Activated T-helper 1 cell treated with anti-CD3 and anti-CD28 coated beads, Interleukin-12 subunit alpha, Interleukin-12 subunit beta, Interleukin-2, Interleukin-4 antibody, amounts not matched to agents 30 ng/mL and 10 ng/mL and 1 ng/mL, durations not matched to agents 14 hours and 24 hours and 36 hours (primary cell): ENCODE measurements at regions of chr4 and their contacts with region 1.

Region 1: DNA sequence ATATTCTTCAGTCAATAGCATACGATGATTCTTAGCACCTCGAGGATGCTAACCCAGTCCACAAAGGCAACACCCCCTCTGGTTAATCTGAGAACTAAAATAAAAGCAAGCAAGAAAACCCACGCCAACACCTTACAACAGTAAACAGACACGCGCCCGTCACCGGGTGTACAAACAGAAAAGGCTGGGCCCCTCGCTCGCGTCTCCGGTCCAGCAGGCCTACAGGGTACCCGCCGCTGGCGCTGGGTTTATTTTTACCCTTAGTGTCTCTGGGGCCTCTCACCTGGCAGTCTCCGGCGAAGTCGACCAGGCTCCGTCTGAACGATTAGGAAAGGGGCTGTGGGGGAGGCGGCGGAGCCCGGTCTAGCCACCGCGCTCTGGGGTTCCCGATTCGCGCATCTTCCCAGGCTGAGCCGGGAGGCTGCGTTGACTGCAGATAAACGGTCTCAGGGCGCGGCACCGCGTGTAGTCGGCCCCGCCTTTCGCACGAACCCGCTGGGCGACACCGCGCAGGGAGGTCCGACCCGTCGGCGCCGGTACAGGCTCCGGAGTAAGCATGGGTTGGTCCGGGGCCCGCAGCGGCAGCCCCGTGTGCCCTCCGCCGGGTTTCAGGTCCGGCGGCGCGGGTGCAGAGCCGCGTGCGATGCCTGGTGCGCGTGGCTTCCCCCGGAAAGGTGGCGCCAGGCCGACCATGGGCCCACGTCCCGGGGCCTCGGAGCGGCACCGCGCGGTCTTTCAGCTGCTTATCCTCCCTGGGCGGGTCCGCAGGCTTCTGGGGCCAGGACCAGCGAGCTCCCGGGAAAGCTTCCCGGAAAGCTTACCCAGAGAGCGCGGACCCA is 441 bp downstream of the SLC9B2 start:
- DNase-seq: peak; percentile 60
- H3K4me3 Mint-ChIP-seq: peak overlapping the region; percentile 99
- H3K27ac Mint-ChIP-seq: peak overlapping the region; percentile 100
- H3K4me1 Mint-ChIP-seq: peaks cover 51% of the 10 kb centered on the region
- H3K27me3 Mint-ChIP-seq: no peaks in the 10 kb centered on the region

Region 2: GRCh38 chr4:102815981-102816380 is 260.1 kb before region 1 on chr4:
- intact Hi-C with region 1: no loop called
- DNase-seq: no peak
- H3K4me3 Mint-ChIP-seq: no peak overlapping the region
- H3K27ac Mint-ChIP-seq: peak overlapping the region; percentile 84
- H3K4me1 Mint-ChIP-seq: peaks cover 87% of the 10 kb centered on the region
- H3K27me3 Mint-ChIP-seq: no peaks in the 10 kb centered on the region

Region 3: GRCh38 chr4:102868781-102869568 is 207.1 kb before region 1 on chr4 and contains the start of gene CISD2:
- intact Hi-C with region 1: loop called (anchors 2 kb)
- DNase-seq: peak; percentile 91
- H3K4me3 Mint-ChIP-seq: peak within 1 kb of the TSS; percentile 93
- H3K27ac Mint-ChIP-seq: peak within 1 kb of the TSS; percentile 99
- H3K4me1 Mint-ChIP-seq: peaks cover 69% of the 10 kb centered on the region
- H3K27me3 Mint-ChIP-seq: no peaks in the 10 kb centered on the region
- total RNA-seq, gene CISD2: 41.2 and 50.7 TPM in 2 replicates

Region 4: GRCh38 chr4:103019308-103020124 is 56.6 kb before region 1 on chr4 and contains the start of gene SLC9B1:
- intact Hi-C with region 1: loop called (anchors 1 kb)
- DNase-seq: peak; percentile 93
- H3K4me3 Mint-ChIP-seq: peak within 1 kb of the TSS; percentile 90
- H3K27ac Mint-ChIP-seq: peak within 1 kb of the TSS; percentile 96
- H3K4me1 Mint-ChIP-seq: peaks cover 25% of the 10 kb centered on the region
- H3K27me3 Mint-ChIP-seq: no peaks in the 10 kb centered on the region
- total RNA-seq, gene SLC9B1: 0.51 and 0.52 TPM in 2 replicates

Region 5: DNA sequence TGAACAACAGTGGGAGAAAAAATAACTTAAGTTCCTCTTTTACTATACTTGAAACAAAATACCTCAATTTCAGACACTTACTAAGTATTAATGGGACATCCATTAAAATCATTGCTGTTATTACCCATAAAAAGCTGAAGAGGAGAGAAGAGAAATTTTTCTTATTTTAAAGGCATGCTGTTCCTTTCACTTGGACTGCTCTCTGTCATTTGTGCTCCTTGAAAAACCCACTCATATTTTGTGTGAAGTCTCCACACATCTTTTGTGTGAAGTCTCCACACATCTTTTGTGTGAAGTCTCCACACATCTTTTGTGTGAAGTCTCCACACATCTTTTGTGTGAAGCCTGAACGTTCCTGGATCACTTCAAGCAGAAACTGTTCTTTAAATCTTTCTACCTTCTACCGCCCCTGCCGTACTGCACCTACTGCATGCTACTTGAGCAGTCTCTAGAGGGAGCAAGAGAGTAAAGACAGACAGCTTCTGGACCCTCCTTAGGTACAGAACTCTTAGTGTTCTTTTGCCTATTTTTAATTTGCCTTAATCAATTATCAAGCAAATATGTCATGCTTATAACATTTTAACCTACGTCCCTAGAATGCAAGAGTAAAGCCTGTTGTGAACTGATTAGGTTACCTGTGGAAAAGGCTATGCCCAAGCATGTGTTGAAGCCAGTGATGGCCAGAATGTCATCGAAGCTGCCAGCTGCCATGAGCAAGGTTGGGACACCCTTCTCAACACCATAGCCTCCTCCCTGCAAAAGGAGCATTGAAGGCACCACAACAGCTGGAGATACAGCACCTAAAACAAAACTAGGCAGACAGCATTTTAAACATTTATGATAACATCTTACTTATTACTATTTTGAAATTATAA is 29.5 kb before region 1 on chr4:
- intact Hi-C with region 1: loop called (anchors 1 kb)
- DNase-seq: peak; percentile 20
- H3K4me3 Mint-ChIP-seq: no peak overlapping the region
- H3K27ac Mint-ChIP-seq: no peak overlapping the region
- H3K4me1 Mint-ChIP-seq: peaks cover 19% of the 10 kb centered on the region
- H3K27me3 Mint-ChIP-seq: no peaks in the 10 kb centered on the region

Region 6: DNA sequence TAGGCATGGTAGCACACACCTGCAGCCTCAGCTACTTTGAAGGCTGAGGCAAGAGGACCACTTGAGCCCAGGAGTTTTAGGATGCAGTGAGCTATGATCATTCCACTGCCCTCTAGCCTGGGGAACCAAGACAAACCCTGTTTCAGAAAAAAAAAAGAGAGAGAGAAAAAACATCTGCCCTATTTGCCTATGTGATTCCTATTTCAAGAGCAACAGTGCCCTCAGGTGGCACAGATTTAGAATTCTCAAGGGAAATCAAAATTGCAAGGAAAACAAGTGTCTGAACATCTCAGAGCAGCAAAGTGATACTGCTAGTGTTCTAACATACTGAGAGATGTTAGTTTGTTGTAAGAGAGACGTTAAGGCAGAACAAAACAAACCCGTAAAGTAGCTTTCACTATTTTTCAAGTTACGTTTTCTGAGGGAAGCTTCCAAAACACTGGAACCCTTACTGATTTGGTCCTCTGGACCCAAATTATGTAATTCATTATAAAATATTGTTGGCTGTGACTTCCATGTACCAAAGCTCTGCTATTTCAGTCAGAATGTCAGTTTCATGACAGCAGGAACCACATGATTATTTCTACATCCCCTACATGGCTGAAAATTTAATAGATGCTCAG is 15.6 kb after region 1 on chr4:
- intact Hi-C with region 1: loop called (anchors 1 kb)
- DNase-seq: peak; percentile 27
- H3K4me3 Mint-ChIP-seq: peak overlapping the region; percentile 71
- H3K27ac Mint-ChIP-seq: peak overlapping the region; percentile 73
- H3K4me1 Mint-ChIP-seq: peaks cover 26% of the 10 kb centered on the region
- H3K27me3 Mint-ChIP-seq: no peaks in the 10 kb centered on the region

Region 7: DNA sequence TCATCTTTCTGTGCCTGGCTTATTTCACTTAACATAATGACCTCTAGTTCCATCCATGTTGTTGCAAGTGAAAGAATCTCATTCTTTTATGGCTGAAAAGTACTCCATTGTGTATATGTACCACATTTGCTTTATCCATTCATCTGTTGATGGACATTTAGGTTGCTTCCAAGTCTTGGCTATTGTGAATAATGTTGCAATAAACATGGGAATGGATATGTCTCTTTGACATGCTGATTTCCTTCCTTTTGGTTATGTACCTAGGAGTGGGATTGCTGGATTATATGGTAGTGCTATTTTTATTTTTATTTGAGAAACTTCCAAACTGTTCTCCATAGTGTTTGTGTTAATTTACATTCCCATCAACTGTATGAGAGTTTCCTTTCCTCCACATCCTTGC is 572.4 kb after region 1 on chr4:
- intact Hi-C with region 1: no loop called
- DNase-seq: no peak
- H3K4me3 Mint-ChIP-seq: no peak overlapping the region
- H3K27ac Mint-ChIP-seq: no peak overlapping the region
- H3K4me1 Mint-ChIP-seq: no peaks in the 10 kb centered on the region
- H3K27me3 Mint-ChIP-seq: no peaks in the 10 kb centered on the region